Heart right ventricle (tissue), 16 donors: ENCODE measurements at regions of chr17 and their contacts with region 1.

Region 1: DNA sequence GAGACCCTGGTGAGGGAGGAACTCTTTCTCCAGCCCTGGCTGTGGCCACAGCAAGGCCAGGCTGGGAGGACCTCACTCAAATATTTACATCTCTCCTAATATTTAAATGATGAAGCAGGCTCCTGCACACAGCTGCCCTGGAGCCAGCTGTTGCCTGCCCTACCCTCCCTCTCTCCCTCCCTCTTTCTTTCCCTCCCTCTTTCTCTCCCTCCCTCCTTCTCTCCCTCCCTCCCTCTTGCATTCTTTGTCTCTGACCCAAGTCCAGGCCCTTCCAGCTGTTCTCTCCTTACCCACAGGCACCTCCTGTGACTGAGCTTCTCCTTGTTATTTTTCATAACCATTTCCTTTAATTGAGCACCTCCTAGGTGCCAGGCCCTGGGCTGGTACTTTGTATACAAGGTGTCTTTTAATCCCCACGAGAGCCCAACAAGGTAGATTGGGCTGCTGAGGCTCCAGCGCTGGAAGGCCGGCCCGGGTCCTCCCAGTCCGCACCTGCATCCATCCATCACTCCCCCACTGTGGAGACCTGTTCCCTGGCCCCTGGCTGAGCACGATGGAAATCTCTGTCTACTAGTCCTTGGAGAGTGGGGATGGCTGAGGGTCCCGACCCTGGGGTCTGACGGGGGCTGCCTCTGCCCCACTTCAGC is 242.3 kb downstream of the SEC14L1 start:
- DNase-seq: peak in 1 of 2 donors; percentile 14
- ATAC-seq: peak in 5 of 8 donors; percentile 11 to 24 (median 15)
- H3K4me3 ChIP-seq: no peak overlapping the region
- H3K27ac ChIP-seq: peak overlapping the region in 9 of 10 donors; percentile 60 to 91 (median 79)
- H3K4me1 ChIP-seq: peaks cover 58 to 100% (median 97%) of the 10 kb centered on the region in 9 donors
- H3K27me3 ChIP-seq: no peaks in the 10 kb centered on the region
- CTCF ChIP-seq: no peak

Region 2: DNA sequence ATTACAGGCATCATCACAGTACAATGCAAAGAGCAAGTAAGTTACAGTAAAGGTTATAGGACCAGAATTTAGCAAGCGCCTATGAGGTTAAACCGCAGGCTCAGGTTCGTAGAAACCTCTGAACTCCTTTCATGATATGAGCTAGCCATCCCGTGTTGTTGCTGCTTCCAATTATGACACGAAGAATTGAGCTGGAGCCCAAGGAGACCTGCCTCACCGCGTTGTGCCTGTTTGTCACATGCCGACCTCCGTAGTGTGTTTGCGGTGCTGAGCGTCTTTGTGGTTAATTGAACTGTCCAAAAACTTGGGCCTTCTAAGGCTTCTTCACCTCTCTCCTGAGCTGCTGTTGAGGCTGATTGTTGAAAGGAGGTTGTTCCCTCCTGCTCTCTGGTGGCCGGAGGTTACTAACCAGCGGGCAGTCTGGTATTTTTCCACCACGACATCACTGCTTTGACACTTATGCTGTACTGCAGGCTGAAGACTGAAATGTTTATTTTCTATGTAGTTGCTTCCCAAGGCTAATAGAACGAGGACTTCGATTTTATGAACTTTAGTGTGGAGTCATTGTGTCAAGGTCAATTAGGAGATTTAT is 174.8 kb before region 1 on chr17:
- intact Hi-C with region 1: no loop called
- DNase-seq: peak in 1 of 2 donors; percentile 47
- ATAC-seq: peak; percentile 48 to 76 (median 70)
- H3K4me3 ChIP-seq: no peak overlapping the region
- H3K27ac ChIP-seq: peak overlapping the region in 9 of 10 donors; percentile 3 to 77 (median 45)
- H3K4me1 ChIP-seq: peaks cover 13 to 91% (median 63%) of the 10 kb centered on the region in 9 donors
- H3K27me3 ChIP-seq: no peaks in the 10 kb centered on the region
- CTCF ChIP-seq: peak in 8 of 9 donors; percentile 8 to 61 (median 44)

Region 3: DNA sequence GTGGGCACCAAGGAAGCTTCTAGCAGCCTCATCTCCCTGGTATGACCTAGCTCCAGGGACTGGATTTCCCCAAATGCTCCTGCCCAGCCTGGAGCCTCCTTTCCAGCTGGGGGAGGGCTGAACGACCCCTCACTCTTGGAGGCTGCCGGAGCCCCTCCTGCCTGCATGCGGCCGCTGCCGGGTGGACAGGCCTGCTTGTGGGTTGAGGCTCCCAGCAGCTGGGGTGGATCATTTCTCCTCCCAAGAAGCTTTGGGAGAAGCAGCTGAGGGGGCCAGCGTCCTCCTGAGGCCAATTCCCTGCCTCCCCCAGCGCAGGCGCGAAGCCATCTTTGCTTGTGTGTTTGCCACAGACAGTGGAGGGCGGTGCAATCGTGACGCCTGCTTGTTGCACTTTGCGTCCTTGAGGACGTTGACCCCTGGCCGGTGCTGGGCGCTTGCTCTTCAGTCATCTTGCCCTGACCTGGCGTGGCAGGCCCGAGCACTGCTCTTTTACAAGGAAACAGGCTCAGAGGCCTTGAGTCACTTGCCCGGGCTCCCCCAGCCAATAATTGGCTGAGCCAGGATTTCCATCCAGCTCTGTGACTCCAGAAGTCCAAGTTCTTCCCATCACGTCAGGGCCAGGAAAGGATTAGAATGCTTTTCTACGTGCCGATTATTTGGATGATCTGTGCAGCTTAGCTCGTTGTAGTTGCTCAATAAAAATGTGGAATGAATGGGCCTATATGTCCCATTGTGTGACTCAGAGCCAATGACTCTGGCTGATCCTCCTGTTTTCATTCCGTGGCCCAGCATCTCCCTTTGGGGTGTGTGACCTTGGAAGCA is 28.5 kb before region 1 on chr17:
- intact Hi-C with region 1: loop called in 2 of 10 experiments (anchors 5 kb)
- DNase-seq: peak; percentile 59 to 76
- ATAC-seq: peak in 6 of 8 donors; percentile 11 to 68 (median 14)
- H3K4me3 ChIP-seq: no peak overlapping the region
- H3K27ac ChIP-seq: peak overlapping the region in 6 of 10 donors; percentile 26 to 72 (median 48)
- H3K4me1 ChIP-seq: peaks cover 17 to 58% (median 40%) of the 10 kb centered on the region in 9 donors
- H3K27me3 ChIP-seq: no peaks in the 10 kb centered on the region
- CTCF ChIP-seq: no peak